Right cardiac atrium (tissue), 5 donors: ENCODE measurements at regions of chr16 and their contacts with region 1.

Region 1: GRCh38 chr16:88442727-88443576 is 10.1 kb upstream of the ZFPM1 start:
- DNase-seq: peak; percentile 76 to 90 (median 90)
- ATAC-seq: peak; percentile 78 to 83
- H3K4me3 ChIP-seq: no peak overlapping the region
- H3K27ac ChIP-seq: no peak overlapping the region
- H3K4me1 ChIP-seq: no peaks in the 10 kb centered on the region
- H3K27me3 ChIP-seq: no peaks in the 10 kb centered on the region

Region 2: DNA sequence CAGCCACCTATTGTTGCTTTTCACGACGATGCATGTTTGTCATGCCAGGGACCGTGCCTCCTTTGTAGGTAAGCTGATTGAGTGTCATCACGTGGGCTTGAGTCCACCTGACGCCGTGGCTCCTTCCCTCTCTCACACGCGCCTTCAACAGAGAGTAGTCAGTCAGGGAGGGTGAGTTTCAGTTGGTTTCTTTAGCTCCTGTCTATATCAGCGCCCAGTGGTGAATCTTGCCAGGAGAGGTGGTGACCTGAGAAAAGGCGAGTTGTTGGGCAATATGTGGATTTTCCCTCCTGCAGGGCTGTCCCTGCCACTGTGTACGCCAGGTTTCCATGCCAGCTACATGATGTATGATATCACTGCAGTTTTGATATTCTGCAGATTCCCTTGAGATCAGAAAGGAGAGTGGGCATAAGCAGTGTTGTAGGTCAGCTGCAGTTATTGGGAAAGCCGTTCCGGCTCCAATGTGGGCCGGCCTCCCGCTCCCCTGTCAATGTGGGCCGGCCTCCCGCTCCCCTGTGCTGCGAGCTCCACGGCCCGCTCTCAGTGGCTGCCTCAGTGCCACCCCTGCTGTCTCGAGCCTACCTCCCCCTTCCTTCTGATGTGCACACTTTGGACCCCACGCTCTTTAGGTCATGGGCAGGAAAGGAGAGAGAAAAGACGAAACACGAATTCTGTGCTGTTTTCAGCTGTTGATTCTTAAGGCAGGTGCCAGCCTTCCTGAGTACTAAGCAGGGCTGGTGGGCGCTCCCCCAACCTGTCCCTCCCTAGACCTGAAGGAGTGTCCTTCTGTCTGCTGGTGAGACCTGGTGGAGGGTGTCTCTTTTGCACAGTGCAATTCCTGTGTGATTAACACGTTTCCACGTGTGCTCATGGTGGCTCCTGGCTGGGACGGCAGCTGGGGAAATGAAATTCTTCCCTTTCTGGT is 460.2 kb before region 1 on chr16:
- intact Hi-C with region 1: loop called in 2 of 4 experiments (anchors 10 kb)
- DNase-seq: no peak
- ATAC-seq: peak in 1 of 2 donors; percentile 7
- H3K4me3 ChIP-seq: no peak overlapping the region
- H3K27ac ChIP-seq: no peak overlapping the region
- H3K4me1 ChIP-seq: no peaks in the 10 kb centered on the region
- H3K27me3 ChIP-seq: no peaks in the 10 kb centered on the region

Region 3: DNA sequence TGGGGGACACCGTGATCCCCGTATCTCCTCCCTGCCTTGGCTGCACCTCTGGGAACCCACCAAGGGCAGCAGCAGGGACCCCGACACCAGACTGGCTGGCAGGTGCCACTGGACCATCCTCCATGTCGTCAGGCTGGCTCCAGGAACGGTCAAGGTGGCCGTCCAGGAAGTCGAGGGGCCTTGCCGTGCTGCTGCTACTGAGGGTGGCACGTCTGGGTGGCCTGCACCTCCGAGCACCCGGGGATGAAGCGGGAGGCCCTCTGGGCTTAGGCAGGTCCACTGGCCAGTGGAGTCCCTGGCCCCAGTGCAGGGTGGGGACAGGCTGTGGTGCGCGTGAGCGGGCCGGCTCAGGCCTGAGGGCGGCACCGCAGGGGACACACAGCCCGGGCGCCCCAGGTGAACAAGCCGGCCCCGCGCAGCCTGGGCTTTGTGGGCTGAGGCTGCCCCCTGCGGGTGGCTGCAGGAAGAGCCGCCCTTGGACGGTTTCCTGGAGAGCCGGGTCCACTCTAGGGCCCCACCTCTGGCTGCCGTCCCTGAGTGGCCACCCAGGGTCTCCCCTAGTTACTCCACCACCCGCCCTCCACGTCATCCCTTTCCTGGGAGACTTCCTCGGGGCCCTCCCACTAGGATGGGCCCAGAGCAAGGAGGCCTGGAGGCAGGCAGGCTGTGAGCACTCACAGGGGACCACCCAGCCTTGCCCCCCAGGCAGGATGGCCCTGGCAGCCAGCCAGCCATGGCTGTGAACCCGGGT is 84.4 kb after region 1 on chr16:
- intact Hi-C with region 1: loop called (anchors 2 to 5 kb)
- DNase-seq: peak; percentile 79 to 91 (median 89)
- ATAC-seq: peak; percentile 49 to 70
- H3K4me3 ChIP-seq: no peak overlapping the region
- H3K27ac ChIP-seq: no peak overlapping the region
- H3K4me1 ChIP-seq: no peaks in the 10 kb centered on the region
- H3K27me3 ChIP-seq: no peaks in the 10 kb centered on the region

Region 4: DNA sequence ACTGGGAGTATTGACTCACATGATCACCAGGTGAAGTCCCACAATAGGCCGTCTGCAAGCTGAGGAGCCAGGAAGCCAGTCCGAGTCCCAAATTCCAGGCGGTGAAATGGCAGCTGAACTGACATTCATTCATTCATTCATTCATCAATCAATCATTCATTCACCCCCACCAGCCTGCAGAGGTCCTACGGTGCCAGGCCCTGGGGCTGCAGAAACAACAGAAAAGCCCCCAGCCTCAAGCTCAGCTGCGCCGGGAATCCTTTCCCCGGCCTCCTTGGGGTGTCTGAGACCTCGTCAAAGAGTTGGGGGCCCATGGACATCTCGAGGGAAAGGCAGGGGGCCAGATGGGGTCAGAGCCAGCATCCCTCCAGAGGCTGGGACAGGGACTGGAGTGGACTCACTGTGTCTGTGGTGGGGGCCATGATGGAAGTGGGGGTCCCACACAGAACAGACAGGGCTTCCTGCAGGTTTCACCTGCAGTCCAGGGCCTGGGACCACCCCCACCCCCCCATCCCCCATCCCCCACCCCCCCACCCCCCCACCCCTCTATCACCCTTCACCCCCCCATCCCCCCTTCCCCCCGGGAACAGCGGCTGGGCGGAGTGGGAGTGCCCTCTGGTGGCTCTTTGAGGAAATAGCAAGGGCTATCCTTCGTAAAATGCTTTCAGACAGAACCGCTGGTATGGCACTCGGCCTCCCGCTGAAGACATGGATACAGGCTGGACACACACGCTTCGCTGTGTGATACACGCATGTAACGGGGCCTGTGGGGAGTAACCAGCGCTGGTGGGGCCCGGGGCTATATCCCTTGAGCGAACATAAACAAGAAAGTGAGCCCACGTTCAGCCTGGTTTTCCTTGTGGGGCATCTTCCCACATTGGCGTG is 118.8 kb after region 1 on chr16:
- intact Hi-C with region 1: loop called in 1 of 4 experiments (anchors 2 kb)
- DNase-seq: peak in 1 of 3 donors; percentile 73
- ATAC-seq: peak; percentile 27 to 28
- H3K4me3 ChIP-seq: no peak overlapping the region
- H3K27ac ChIP-seq: no peak overlapping the region
- H3K4me1 ChIP-seq: no peaks in the 10 kb centered on the region
- H3K27me3 ChIP-seq: no peaks in the 10 kb centered on the region

Region 5: DNA sequence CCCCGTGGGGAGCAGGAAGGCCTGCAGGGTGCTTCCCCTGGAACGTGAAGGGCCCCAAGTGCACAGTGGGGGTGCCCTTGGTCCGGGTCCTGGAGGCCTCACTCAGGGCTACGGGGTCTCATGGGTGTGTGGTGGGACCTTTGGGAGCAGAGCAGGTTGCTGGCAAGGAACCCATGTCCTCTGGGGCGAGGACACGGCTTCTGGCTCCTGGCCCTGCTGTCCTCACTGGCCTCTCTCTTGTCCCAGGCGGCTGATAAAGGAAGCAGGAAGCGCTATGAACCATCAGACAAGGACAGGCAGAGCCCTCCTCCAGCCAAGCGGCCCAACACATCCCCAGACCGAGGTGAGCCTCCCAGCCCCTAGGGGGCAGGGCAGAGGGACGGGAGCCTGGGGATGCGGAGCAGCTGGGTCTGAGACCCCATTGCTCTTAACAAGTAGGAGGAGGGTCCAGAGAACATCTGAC is 185.6 kb after region 1 on chr16:
- intact Hi-C with region 1: no loop called
- DNase-seq: peak in 1 of 3 donors; percentile 82
- ATAC-seq: peak; percentile 75
- H3K4me3 ChIP-seq: no peak overlapping the region
- H3K27ac ChIP-seq: peak overlapping the region; percentile 32
- H3K4me1 ChIP-seq: peaks cover 2% of the 10 kb centered on the region
- H3K27me3 ChIP-seq: no peaks in the 10 kb centered on the region